CD4-positive, alpha-beta memory T cell (primary cell): ENCODE measurements at regions of chr2 and their contacts with region 1.

Region 1: DNA sequence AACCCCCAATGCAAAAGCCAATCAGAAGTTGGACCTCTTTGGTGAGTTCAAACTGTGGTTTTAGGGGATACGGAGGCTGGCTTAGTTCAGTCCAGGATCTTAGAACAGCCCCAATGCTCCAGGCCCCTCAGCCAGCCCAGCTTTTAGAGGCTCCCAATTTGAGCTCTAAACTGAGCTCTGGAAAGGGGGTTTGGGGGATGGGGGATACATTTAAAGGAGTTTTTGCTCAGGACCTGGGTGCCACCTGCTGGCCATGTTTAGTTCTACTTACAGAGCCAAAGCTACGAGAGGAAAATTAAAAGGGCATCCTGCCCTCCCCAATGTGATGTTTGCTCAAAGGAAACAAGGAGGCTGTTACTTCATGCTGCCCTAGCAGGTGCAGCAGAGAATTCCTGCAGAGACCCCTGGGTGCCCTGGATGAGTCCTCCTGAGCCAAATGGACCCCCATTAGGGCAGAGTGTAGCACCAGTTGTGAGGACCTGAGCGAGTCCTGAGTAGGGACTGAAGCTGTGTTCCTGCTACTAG is 15.9 kb upstream of the TMEM214 start:
- DNase-seq: peak; percentile 18 to 49 (median 27)
- H3K4me3 ChIP-seq: no peak overlapping the region
- H3K4me3 Mint-ChIP-seq: no peak overlapping the region
- H3K27ac ChIP-seq: no peak overlapping the region
- H3K27ac Mint-ChIP-seq: no peak overlapping the region
- H3K4me1 ChIP-seq: no peaks in the 10 kb centered on the region
- H3K4me1 Mint-ChIP-seq: no peaks in the 10 kb centered on the region
- H3K27me3 ChIP-seq: no peaks in the 10 kb centered on the region
- H3K27me3 Mint-ChIP-seq: peaks cover 0 to 2% of the 10 kb centered on the region in 2 donors

Region 2: GRCh38 chr2:26970244-26970920 is 46.5 kb before region 1 on chr2 and contains the start of gene MAPRE3:
- CTCF ChIA-PET with region 1: interaction called, 12 read pairs
- POLR2A ChIA-PET with region 1: no interaction called
- intact Hi-C with region 1: no loop called
- DNase-seq: peak; percentile 81 to 93 (median 85)
- H3K4me3 ChIP-seq: peak within 1 kb of the TSS; percentile 66 to 76
- H3K4me3 Mint-ChIP-seq: peak within 1 kb of the TSS; percentile 82 to 90 (median 85)
- H3K27ac ChIP-seq: peak within 1 kb of the TSS; percentile 44
- H3K27ac Mint-ChIP-seq: peak within 1 kb of the TSS; percentile 75 to 96 (median 92)
- H3K4me1 ChIP-seq: peaks cover 15% of the 10 kb centered on the region
- H3K4me1 Mint-ChIP-seq: peaks cover 12 to 30% (median 18%) of the 10 kb centered on the region in 4 donors
- H3K27me3 ChIP-seq: no peaks in the 10 kb centered on the region
- H3K27me3 Mint-ChIP-seq: peaks cover 5 to 11% of the 10 kb centered on the region in 2 donors
- total RNA-seq, gene MAPRE3: 3.4 to 3.6 TPM

Region 3: GRCh38 chr2:27123302-27124231 is 106.7 kb after region 1 on chr2 and contains the start of gene ABHD1:
- CTCF ChIA-PET with region 1: no interaction called
- POLR2A ChIA-PET with region 1: no interaction called
- intact Hi-C with region 1: no loop called
- DNase-seq: peak; percentile 49 to 76 (median 56)
- H3K4me3 ChIP-seq: peak within 1 kb of the TSS; percentile 55 to 70
- H3K4me3 Mint-ChIP-seq: peak within 1 kb of the TSS; percentile 82 to 96 (median 91)
- H3K27ac ChIP-seq: peak within 1 kb of the TSS; percentile 41
- H3K27ac Mint-ChIP-seq: peak within 1 kb of the TSS; percentile 77 to 92 (median 88)
- H3K4me1 ChIP-seq: peaks cover 18% of the 10 kb centered on the region
- H3K4me1 Mint-ChIP-seq: peaks cover 11 to 30% (median 18%) of the 10 kb centered on the region in 4 donors
- H3K27me3 ChIP-seq: peaks cover 5% of the 10 kb centered on the region
- H3K27me3 Mint-ChIP-seq: peaks cover 11 to 16% of the 10 kb centered on the region in 2 donors
- total RNA-seq, gene ABHD1: 1.3 to 2.1 TPM